ENCODE measurements at regions of chr3 and their contacts with region 1.

Region 1: GRCh38 chr3:172332256-172333041 is 115.8 kb downstream of the GHSR start:
- DNase-seq: peak; percentile 80
- H3K4me3 ChIP-seq: no peak overlapping the region
- H3K27ac ChIP-seq: peak overlapping the region in 2 of 4 donors; percentile 33 to 53
- H3K4me1 ChIP-seq: peaks cover 0 to 6% (median 3%) of the 10 kb centered on the region in 4 donors
- H3K27me3 ChIP-seq: no peaks in the 10 kb centered on the region
- CTCF ChIP-seq: peak; percentile 62 to 93 (median 83)
- EP300 ChIP-seq: no peak
- POLR2A ChIP-seq: no peak

Region 2: GRCh38 chr3:171829841-171830517 is 502.5 kb before region 1 on chr3:
- intact Hi-C with region 1: loop called (anchors 10 kb)
- DNase-seq: peak; percentile 89
- H3K4me3 ChIP-seq: no peak overlapping the region
- H3K27ac ChIP-seq: peak overlapping the region; percentile 35 to 54 (median 46)
- H3K4me1 ChIP-seq: peaks cover 0 to 23% (median 14%) of the 10 kb centered on the region in 4 donors
- H3K27me3 ChIP-seq: no peaks in the 10 kb centered on the region
- CTCF ChIP-seq: peak in 3 of 4 experiments; percentile 44 to 58 (median 49)
- EP300 ChIP-seq: no peak
- POLR2A ChIP-seq: no peak

Region 3: DNA sequence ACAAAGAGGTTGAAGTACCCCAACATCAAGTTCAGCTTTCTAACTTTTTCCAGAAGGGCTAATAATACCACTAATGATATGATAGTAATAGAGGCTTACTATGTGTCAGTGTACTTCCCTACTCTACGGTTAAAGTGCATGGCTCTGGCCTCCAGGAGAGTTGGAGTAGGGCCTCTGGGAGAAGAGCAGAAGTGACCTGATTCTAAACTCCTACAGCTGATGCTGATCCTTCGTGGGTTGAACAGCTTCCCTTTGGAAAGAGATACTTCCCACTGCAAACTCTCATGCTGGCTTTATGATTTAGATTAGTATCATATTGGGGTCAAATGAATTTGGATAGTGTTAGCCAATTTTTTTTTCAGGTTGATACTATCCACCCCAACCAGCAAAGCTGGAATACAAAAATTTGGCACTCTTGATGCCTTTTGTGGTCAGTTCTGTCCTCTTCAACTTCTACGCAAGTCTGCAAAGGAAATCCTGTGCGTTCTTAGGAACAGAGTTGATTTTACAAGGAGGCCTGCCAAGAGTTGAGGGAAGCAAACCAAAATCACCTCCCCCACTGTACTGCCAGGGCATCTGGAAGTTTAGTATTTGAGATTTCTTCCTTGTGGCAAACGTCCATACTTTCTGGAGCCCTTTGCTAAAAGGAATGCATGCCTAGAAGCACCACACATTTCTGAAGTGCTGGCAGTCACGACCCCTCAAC is 471.5 kb before region 1 on chr3:
- intact Hi-C with region 1: no loop called
- DNase-seq: no peak
- H3K4me3 ChIP-seq: no peak overlapping the region
- H3K27ac ChIP-seq: peak overlapping the region in 3 of 4 donors; percentile 2 to 56 (median 51)
- H3K4me1 ChIP-seq: peaks cover 0 to 15% (median 12%) of the 10 kb centered on the region in 4 donors
- H3K27me3 ChIP-seq: no peaks in the 10 kb centered on the region
- CTCF ChIP-seq: no peak
- EP300 ChIP-seq: no peak
- POLR2A ChIP-seq: no peak

Region 4: GRCh38 chr3:172289582-172289981 is 42.9 kb before region 1 on chr3:
- intact Hi-C with region 1: loop called (anchors 5 kb)
- DNase-seq: peak; percentile 68
- H3K4me3 ChIP-seq: no peak overlapping the region
- H3K27ac ChIP-seq: peak overlapping the region in 3 of 4 donors; percentile 5 to 49 (median 47)
- H3K4me1 ChIP-seq: peaks cover 0 to 39% (median 22%) of the 10 kb centered on the region in 4 donors
- H3K27me3 ChIP-seq: no peaks in the 10 kb centered on the region
- CTCF ChIP-seq: peak; percentile 9 to 53 (median 34)
- EP300 ChIP-seq: no peak
- POLR2A ChIP-seq: no peak

Region 5: GRCh38 chr3:172367205-172368105 is 35.0 kb after region 1 on chr3:
- intact Hi-C with region 1: no loop called
- DNase-seq: no peak
- H3K4me3 ChIP-seq: no peak overlapping the region
- H3K27ac ChIP-seq: no peak overlapping the region
- H3K4me1 ChIP-seq: peaks cover 0 to 15% (median 3%) of the 10 kb centered on the region in 4 donors
- H3K27me3 ChIP-seq: no peaks in the 10 kb centered on the region
- CTCF ChIP-seq: no peak
- EP300 ChIP-seq: no peak
- POLR2A ChIP-seq: no peak

Region 6: GRCh38 chr3:172476347-172476746 is 143.9 kb after region 1 on chr3:
- intact Hi-C with region 1: loop called (anchors 5 kb)
- DNase-seq: no peak
- H3K4me3 ChIP-seq: peak overlapping the region in 2 of 4 donors; percentile 31 to 37
- H3K27ac ChIP-seq: no peak overlapping the region
- H3K4me1 ChIP-seq: no peaks in the 10 kb centered on the region
- H3K27me3 ChIP-seq: no peaks in the 10 kb centered on the region
- CTCF ChIP-seq: no peak
- EP300 ChIP-seq: no peak
- POLR2A ChIP-seq: no peak

Region 7: DNA sequence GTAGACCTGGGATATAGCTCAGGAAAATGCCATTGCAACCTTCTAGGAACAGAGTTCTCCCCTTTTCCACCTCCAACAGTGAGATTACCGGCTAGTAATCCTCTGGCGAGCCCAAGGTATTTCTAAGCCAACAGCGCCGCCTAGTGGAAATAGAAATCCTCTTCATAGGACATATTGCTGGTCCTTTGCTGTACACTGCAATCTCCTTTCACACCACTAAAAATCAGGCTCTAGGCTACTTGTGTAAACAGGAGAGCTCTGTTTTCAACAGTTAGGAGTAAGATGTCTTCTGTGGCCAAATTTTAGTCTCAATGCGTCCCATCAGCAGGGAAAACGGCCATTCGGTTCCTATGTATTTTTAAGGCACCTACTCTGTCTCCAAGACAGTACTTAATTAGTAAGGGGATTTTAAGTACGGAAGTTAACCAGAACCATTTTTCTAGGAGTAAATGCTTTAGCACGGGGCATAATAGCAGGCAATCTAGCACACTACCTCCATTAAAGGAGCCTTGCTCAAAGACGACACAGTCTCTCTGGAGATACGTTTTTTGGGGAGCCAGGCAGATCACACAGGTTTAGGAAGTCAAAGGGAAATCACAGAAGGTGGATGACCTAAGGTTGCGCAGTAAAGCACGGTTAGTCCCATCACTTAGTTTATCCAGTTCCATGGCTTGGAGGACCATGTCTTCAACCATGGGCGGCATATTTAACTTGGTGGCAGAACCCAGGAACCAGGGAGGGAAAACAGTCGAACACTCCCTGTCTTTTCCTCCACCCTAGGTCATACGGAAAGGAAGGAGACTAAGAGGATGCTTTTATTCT is 334.6 kb after region 1 on chr3:
- intact Hi-C with region 1: loop called (anchors 10 kb)
- DNase-seq: peak; percentile 85
- H3K4me3 ChIP-seq: no peak overlapping the region
- H3K27ac ChIP-seq: no peak overlapping the region
- H3K4me1 ChIP-seq: peaks cover 0 to 4% (median 0%) of the 10 kb centered on the region in 4 donors
- H3K27me3 ChIP-seq: no peaks in the 10 kb centered on the region
- CTCF ChIP-seq: peak; percentile 64 to 92 (median 82)
- EP300 ChIP-seq: no peak
- POLR2A ChIP-seq: no peak

Region 8: GRCh38 chr3:173479301-173479700 is 1146.9 kb after region 1 on chr3:
- intact Hi-C with region 1: no loop called
- DNase-seq: no peak
- H3K4me3 ChIP-seq: no peak overlapping the region
- H3K27ac ChIP-seq: no peak overlapping the region
- H3K4me1 ChIP-seq: no peaks in the 10 kb centered on the region
- H3K27me3 ChIP-seq: no peaks in the 10 kb centered on the region
- CTCF ChIP-seq: no peak
- EP300 ChIP-seq: no peak
- POLR2A ChIP-seq: no peak

Measured in sigmoid colon (tissue), 7 donors.